AG04449 (cell line): ENCODE measurements at regions of chr17 and their contacts with region 1.

Region 1: DNA sequence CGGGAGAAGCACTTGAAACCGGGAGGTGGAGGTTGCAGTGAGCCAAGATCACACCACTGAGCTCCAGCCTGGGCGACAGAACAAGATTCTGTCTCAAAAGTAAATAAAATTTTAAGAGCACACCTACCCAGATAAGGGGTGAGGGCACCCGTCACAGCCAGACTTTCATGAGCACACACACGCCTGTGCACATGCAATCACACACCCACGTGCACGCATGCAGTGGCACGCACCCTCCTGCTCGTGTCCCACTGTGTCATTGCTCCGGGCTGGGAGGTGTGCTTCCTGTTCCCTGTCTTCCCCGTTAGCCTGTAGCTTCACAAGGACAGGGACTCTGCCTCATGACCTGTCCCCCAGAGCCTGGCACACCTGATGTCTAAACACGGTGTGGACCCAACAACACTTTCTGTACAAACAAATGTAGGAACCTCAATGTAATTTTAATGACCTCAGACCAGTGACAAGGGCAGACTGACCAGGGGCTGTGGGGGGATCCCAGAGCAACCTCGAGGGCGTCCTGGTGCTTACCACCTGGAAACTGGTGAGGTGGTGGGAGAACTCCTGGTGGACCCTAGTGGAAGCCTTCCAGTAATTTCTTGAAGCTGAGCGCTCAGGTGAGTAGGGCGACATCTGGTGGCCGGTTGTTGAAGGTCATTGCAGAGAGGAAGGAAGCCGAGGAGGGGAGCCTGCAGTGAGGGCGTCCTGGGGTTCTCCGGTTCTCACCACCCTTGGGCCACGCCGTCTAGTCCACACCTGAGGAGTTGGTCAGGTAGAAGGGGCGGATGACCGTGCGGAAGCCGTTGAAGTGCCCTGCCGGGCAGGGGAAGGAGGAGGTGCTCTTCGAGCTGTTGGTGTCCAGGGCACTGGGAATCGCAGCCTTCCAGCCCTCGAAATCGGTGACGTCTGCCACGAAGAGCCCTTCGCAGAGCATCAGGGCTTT is 8.6 kb downstream of the LGALS3BP start:
- DNase-seq: no peak
- H3K4me3 ChIP-seq: no peak overlapping the region; the same call in 1 of the 2 replicates
- CTCF ChIP-seq: peak; percentile 83

Region 2: GRCh38 chr17:78865682-78866390 is 105.3 kb before region 1 on chr17:
- CTCF ChIA-PET with region 1: interaction called, 214 read pairs
- POLR2A ChIA-PET with region 1: interaction called, 5 read pairs
- DNase-seq: no peak
- H3K4me3 ChIP-seq: no peak overlapping the region
- CTCF ChIP-seq: peak; percentile 87

Region 3: DNA sequence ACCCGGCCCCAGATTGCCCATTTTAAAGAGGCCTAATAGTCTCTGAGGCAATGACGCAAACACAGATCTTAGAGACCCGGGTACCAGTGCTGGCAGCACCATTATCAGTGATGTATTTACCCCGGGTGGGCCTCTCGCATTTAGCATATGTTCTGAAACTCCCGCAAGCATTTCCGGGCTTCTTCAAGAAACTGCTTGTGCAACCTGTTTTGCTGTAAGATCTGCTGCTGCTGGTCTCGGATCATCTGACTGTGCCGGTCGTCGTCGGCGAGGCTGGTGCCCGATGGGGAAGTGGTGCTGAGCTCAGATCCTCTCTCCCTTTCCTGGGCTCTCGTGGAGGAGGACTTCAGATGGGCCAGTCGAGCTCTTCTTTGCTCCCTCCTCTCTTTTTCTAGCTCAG is 80.6 kb before region 1 on chr17:
- CTCF ChIA-PET with region 1: interaction called, 15 read pairs
- POLR2A ChIA-PET with region 1: no interaction called
- DNase-seq: no peak
- H3K4me3 ChIP-seq: no peak overlapping the region
- CTCF ChIP-seq: no peak

Region 4: GRCh38 chr17:78915872-78916632 is 55.1 kb before region 1 on chr17:
- CTCF ChIA-PET with region 1: interaction called, 10 read pairs
- POLR2A ChIA-PET with region 1: no interaction called
- DNase-seq: no peak
- H3K4me3 ChIP-seq: peak overlapping the region; percentile 8
- CTCF ChIP-seq: no peak

Region 5: DNA sequence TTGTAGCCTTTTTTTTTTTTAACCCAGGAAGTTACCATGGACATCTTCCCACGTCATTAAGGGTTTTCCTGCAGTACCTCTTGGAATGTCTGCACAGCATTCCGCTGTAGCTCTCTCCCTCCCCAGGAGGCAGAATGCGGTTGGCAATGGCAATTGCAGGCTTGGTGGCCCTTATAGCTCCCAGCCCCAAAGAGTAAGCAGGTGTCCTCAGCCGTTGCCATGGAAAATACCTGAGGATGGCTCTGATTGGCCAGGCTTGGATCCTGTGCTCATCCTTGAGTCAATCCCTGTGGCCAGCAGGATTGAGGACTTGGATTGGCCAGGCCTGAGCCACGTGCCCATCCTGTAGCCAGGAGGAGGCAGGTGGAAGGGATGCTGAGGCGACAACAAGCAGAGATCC is 30.4 kb before region 1 on chr17:
- CTCF ChIA-PET with region 1: interaction called, 25 read pairs
- POLR2A ChIA-PET with region 1: no interaction called
- DNase-seq: no peak
- H3K4me3 ChIP-seq: no peak overlapping the region
- CTCF ChIP-seq: peak; percentile 18

Region 6: GRCh38 chr17:78953356-78954265 is 17.5 kb before region 1 on chr17:
- CTCF ChIA-PET with region 1: interaction called, 107 read pairs
- POLR2A ChIA-PET with region 1: no interaction called
- DNase-seq: no peak
- H3K4me3 ChIP-seq: no peak overlapping the region
- CTCF ChIP-seq: no peak